CD8-positive, alpha-beta T cell (primary cell): ENCODE measurements at regions of chr1 and their contacts with region 1.

Region 1: DNA sequence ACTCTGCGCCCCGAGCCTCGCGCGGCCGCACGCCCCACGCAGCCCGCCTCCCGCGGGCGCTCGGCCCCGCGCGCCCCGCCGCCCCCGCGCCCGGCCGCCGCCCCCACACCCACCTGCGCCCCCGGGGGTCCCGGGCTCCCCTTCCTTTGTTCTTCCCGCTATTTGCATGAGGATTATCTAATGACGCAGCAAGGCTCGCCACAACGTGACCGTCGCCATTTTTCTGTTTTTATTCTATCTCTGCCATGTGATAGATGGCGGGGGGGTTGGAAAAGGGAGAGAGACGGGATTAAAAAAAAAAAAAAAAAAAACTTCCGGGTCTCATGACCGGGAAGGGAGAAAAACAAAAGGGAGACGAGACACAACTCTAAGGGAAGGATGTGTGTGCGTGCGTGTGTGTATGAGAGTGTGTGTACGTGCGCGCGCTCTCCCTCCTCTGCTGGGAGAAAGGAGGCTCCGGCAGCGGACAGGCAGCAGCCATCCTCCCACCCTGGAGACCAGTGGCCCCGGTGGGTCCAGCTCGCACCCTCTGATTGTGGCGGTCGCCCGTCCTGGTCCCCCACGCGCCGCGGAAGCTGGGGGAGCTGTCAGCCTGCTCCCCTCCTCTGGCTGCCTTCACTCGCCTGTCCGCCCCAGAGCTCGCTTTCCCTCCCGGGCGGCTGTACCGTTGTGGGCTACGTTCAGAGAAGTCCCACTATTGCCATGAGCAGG is 80.4 kb upstream of the AK4 start:
- DNase-seq: peak; percentile 29 to 86 (median 64)
- ATAC-seq: peak; percentile 18
- H3K4me3 ChIP-seq: peak overlapping the region; percentile 76 to 88
- H3K4me3 Mint-ChIP-seq: peak overlapping the region; percentile 98
- H3K27ac ChIP-seq: peak overlapping the region; percentile 92 to 95
- H3K27ac Mint-ChIP-seq: peak overlapping the region; percentile 100
- H3K4me1 ChIP-seq: peaks cover 43% of the 10 kb centered on the region
- H3K4me1 Mint-ChIP-seq: peaks cover 57% of the 10 kb centered on the region
- H3K27me3 ChIP-seq: no peaks in the 10 kb centered on the region
- H3K27me3 Mint-ChIP-seq: no peaks in the 10 kb centered on the region
- CTCF ChIP-seq: no peak

Region 2: GRCh38 chr1:63327417-63328139 is 1740.1 kb before region 1 on chr1:
- CTCF ChIA-PET with region 1: no interaction called
- POLR2A ChIA-PET with region 1: no interaction called
- intact Hi-C with region 1: loop called in 1 of 2 experiments (anchors 10 kb)
- DNase-seq: peak in 2 of 9 experiments; percentile 36 to 51
- ATAC-seq: peak; percentile 15
- H3K4me3 ChIP-seq: no peak overlapping the region
- H3K4me3 Mint-ChIP-seq: no peak overlapping the region
- H3K27ac ChIP-seq: no peak overlapping the region
- H3K27ac Mint-ChIP-seq: no peak overlapping the region
- H3K4me1 ChIP-seq: peaks cover 28% of the 10 kb centered on the region
- H3K4me1 Mint-ChIP-seq: peaks cover 25% of the 10 kb centered on the region
- H3K27me3 ChIP-seq: peaks cover 62 to 81% of the 10 kb centered on the region in 2 experiments
- H3K27me3 Mint-ChIP-seq: peaks cover 70% of the 10 kb centered on the region
- CTCF ChIP-seq: no peak

Region 3: DNA sequence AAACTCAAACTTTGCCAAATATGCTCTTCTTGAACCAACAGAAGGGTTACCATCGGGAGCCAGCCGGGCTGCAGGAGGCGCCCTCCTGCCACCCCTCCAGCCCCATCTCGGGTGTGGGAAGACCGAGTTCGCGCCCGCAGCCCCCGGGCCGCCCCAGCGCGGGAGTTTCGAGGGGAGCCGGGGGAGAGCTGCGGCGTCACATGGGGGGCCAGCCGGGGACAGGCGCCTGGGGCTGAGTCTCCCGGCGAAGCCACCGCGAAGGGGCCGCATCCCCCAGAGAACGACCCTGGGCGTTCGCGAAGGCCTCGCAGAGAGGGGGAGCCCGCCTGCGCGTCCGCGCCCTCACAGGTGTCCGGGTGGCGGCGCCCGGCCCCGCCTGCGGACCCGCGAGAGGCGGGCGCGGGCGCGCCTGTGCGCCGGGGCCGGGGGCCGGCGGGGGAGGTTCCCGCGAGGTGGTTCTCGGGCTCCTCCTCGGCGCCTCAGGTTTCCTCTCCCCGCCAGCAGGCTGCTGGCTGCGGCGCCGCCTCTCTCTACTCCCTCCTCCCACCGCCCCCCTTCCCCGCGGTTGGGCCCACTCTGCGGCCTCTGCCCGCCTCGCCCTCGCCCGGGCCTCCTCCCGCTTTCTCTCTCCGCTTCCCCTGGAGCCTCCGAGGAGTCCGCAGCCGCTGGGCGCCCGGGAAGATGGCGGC is 323.0 kb before region 1 on chr1 and contains the start of gene RAVER2:
- CTCF ChIA-PET with region 1: no interaction called
- POLR2A ChIA-PET with region 1: no interaction called
- intact Hi-C with region 1: loop called in 1 of 2 experiments (anchors 10 kb)
- DNase-seq: peak; percentile 16 to 79 (median 57)
- ATAC-seq: peak; percentile 81
- H3K4me3 ChIP-seq: peak within 1 kb of the TSS; percentile 52 to 64
- H3K4me3 Mint-ChIP-seq: peak within 1 kb of the TSS; percentile 90
- H3K27ac ChIP-seq: peak within 1 kb of the TSS in 1 of 2 experiments; percentile 53
- H3K27ac Mint-ChIP-seq: peak within 1 kb of the TSS; percentile 75
- H3K4me1 ChIP-seq: peaks cover 13% of the 10 kb centered on the region
- H3K4me1 Mint-ChIP-seq: peaks cover 22% of the 10 kb centered on the region
- H3K27me3 ChIP-seq: no peaks in the 10 kb centered on the region
- H3K27me3 Mint-ChIP-seq: peaks cover 4% of the 10 kb centered on the region
- CTCF ChIP-seq: peak; percentile 43
- total RNA-seq, gene RAVER2: 1.1 TPM

Region 4: GRCh38 chr1:64966158-64966971 is 101.3 kb before region 1 on chr1 and contains the start of gene JAK1:
- CTCF ChIA-PET with region 1: interaction called, 7 read pairs
- POLR2A ChIA-PET with region 1: interaction called, 21 read pairs
- intact Hi-C with region 1: loop called (anchors 1 to 2 kb)
- DNase-seq: peak; percentile 77 to 95 (median 92)
- ATAC-seq: peak; percentile 83
- H3K4me3 ChIP-seq: peak within 1 kb of the TSS; percentile 81 to 95
- H3K4me3 Mint-ChIP-seq: peak within 1 kb of the TSS; percentile 92
- H3K27ac ChIP-seq: peak within 1 kb of the TSS; percentile 87 to 97
- H3K27ac Mint-ChIP-seq: peak within 1 kb of the TSS; percentile 97
- H3K4me1 ChIP-seq: peaks cover 51% of the 10 kb centered on the region
- H3K4me1 Mint-ChIP-seq: peaks cover 51% of the 10 kb centered on the region
- H3K27me3 ChIP-seq: no peaks in the 10 kb centered on the region
- H3K27me3 Mint-ChIP-seq: no peaks in the 10 kb centered on the region
- CTCF ChIP-seq: no peak
- total RNA-seq, gene JAK1: 280 to 298 TPM

Region 5: DNA sequence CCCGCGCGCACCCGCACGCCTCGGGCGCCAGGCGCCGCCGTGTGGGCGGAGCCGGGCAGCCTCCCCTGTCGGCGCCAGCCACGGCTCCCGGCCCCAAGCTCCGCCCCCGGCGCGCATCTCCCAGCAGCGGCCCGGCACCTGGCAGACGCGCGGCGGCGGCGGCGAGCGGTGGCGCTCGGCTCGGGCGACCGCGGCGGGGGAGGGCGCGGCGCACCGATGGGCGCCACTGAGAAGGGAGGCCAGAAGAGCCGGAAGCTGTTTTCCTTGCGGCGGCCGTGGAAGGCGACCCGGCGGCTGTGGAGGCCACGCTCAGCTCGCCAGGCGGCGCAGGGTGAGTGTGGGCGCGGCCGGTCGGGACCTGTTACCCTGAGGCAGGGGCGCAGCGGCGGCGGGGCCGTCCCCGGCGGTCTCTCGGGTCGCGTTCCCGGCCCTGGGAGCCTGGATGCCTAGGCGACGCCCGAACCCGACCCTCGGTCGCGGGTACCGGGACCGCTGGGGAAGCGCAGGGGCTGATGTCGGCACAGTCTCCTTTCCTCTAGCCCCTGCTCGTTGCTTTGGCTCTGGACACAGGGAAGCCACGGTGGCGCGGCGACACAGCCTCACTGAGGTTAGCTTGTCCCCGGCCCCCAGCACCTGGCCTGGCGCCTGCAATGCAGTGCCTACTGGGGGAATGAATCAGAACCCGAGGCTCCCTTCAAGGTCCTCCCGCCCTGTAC is 186.8 kb after region 1 on chr1:
- CTCF ChIA-PET with region 1: no interaction called
- POLR2A ChIA-PET with region 1: no interaction called
- intact Hi-C with region 1: loop called (anchors 2 to 5 kb)
- DNase-seq: peak; percentile 72 to 93 (median 84)
- ATAC-seq: peak; percentile 97
- H3K4me3 ChIP-seq: peak overlapping the region; percentile 77 to 91
- H3K4me3 Mint-ChIP-seq: peak overlapping the region; percentile 97
- H3K27ac ChIP-seq: peak overlapping the region in 1 of 2 experiments; percentile 57
- H3K27ac Mint-ChIP-seq: no peak overlapping the region
- H3K4me1 ChIP-seq: peaks cover 17% of the 10 kb centered on the region
- H3K4me1 Mint-ChIP-seq: peaks cover 18% of the 10 kb centered on the region
- H3K27me3 ChIP-seq: no peaks in the 10 kb centered on the region
- H3K27me3 Mint-ChIP-seq: peaks cover 10% of the 10 kb centered on the region
- CTCF ChIP-seq: no peak

Region 6: GRCh38 chr1:65505547-65506300 is 438.1 kb after region 1 on chr1:
- CTCF ChIA-PET with region 1: no interaction called
- POLR2A ChIA-PET with region 1: no interaction called
- intact Hi-C with region 1: no loop called
- DNase-seq: no peak
- ATAC-seq: no peak
- H3K4me3 ChIP-seq: no peak overlapping the region
- H3K4me3 Mint-ChIP-seq: no peak overlapping the region
- H3K27ac ChIP-seq: no peak overlapping the region
- H3K27ac Mint-ChIP-seq: no peak overlapping the region
- H3K4me1 ChIP-seq: no peaks in the 10 kb centered on the region
- H3K4me1 Mint-ChIP-seq: no peaks in the 10 kb centered on the region
- H3K27me3 ChIP-seq: no peaks in the 10 kb centered on the region
- H3K27me3 Mint-ChIP-seq: no peaks in the 10 kb centered on the region
- CTCF ChIP-seq: no peak

Region 7: GRCh38 chr1:66929999-66930822 is 1862.6 kb after region 1 on chr1:
- CTCF ChIA-PET with region 1: no interaction called
- POLR2A ChIA-PET with region 1: no interaction called
- intact Hi-C with region 1: loop called in 1 of 2 experiments (anchors 10 kb)
- DNase-seq: peak; percentile 88 to 97 (median 95)
- ATAC-seq: peak; percentile 70
- H3K4me3 ChIP-seq: peak overlapping the region; percentile 86 to 90
- H3K4me3 Mint-ChIP-seq: peak overlapping the region; percentile 86
- H3K27ac ChIP-seq: peak overlapping the region; percentile 87 to 90
- H3K27ac Mint-ChIP-seq: peak overlapping the region; percentile 94
- H3K4me1 ChIP-seq: peaks cover 40% of the 10 kb centered on the region
- H3K4me1 Mint-ChIP-seq: peaks cover 61% of the 10 kb centered on the region
- H3K27me3 ChIP-seq: no peaks in the 10 kb centered on the region
- H3K27me3 Mint-ChIP-seq: no peaks in the 10 kb centered on the region
- CTCF ChIP-seq: peak; percentile 17